Right ventricle myocardium superior (tissue), 1 donor: ENCODE measurements at regions of chr14 and their contacts with region 1.

Region 1: DNA sequence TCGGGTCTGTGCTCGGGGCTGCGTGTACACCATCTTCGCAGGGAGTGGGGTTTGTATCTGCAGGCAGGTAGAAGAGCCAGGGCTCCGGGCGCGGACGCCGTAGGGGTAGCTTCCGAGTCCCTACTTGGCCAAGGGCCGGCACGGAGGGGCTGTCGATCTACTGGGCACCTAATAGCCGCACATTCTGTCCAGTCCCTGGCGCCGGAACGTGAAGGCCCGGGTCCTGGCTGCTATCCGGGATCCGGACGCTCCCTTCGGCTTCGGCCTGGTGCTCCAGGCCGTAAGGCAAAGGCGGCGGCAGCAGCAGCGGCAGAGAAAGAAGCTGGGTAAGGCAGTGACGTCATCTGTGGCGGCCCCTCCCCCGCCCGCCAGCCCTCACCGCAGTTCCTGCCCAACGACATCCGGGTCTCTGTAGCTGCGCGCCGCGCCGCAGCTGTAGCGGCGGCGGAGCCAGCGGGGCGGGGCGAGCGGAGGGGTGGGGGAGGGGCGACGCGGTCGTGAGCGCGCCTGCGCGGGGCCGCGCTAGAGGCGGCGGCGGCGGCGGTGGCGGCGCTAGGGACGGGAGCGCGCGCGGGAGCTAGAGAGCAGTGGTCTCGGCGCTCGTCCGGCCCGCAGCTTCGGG is at the start of gene PPM1A:
- DNase-seq: peak; percentile 98
- ATAC-seq: peak; percentile 93
- total RNA-seq, gene PPM1A: 116 TPM

Region 2: GRCh38 chr14:60002819-60003492 is 245.9 kb before region 1 on chr14:
- intact Hi-C with region 1: loop called (anchors 5 kb)
- DNase-seq: peak; percentile 87
- ATAC-seq: peak; percentile 99